ENCODE measurements at regions of chr2 and their contacts with region 1.

Region 1: DNA sequence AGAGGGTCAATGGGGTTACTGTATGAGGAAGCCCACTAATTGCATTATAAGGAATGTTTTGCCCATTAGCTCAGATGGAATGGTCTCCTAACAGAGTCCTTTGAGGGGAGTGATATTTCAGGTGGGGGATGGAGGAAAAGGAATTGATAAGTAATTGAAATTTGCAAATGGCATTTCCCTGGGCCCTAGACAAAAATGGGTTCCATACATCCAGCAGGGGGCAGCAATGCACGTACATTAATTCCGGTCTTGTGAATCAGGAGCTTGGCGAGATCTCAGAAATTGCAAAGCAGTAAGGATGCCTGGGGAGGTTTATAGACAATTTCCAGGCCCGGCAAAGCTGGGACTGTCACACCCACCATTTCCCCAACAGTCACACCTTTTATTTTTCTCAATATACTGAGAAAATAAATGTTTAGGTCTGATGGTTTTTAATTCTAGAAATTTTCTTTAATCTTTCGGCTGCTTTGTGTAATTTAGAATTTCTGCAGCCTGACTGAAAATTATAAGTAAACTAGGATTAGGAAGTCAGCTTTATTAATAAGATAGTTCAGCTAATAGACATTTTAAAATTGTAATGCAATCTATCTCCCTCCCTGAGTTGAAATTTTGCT is 122.8 kb downstream of the LYPD1 start:
- DNase-seq: peak; percentile 10
- H3K4me3 ChIP-seq: no peak overlapping the region
- H3K27me3 ChIP-seq: no peaks in the 10 kb centered on the region
- CTCF ChIP-seq: peak; percentile 60

Region 2: DNA sequence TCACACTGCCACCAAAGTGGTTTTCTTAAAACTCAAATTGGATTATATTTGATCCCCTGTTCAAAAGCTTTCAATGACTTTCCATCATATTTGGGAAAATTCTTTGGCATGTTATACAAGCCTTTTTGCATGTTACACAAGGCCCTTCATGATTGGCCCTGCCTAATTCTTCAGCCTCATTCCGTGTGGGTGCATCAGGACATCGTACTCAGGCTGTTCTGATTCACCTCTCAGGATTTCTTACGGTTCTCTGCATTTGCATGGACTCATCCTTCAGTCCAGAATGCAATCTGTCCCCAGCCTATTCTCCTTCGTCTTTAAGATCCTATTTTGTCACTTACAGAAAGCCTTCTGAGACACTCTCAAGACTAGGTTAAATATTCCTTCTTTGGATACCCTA is 15.1 kb after region 1 on chr2:
- CTCF ChIA-PET with region 1: interaction called, 17 read pairs
- POLR2A ChIA-PET with region 1: no interaction called
- DNase-seq: no peak
- H3K4me3 ChIP-seq: no peak overlapping the region
- H3K27me3 ChIP-seq: no peaks in the 10 kb centered on the region
- CTCF ChIP-seq: no peak

Region 3: GRCh38 chr2:132582353-132582739 is 35.2 kb after region 1 on chr2:
- CTCF ChIA-PET with region 1: no interaction called
- POLR2A ChIA-PET with region 1: no interaction called
- DNase-seq: no peak
- H3K4me3 ChIP-seq: no peak overlapping the region
- H3K27me3 ChIP-seq: no peaks in the 10 kb centered on the region
- CTCF ChIP-seq: no peak

Region 4: GRCh38 chr2:132608311-132608710 is 61.1 kb after region 1 on chr2:
- CTCF ChIA-PET with region 1: no interaction called
- POLR2A ChIA-PET with region 1: no interaction called
- DNase-seq: no peak
- H3K4me3 ChIP-seq: no peak overlapping the region
- H3K27me3 ChIP-seq: no peaks in the 10 kb centered on the region
- CTCF ChIP-seq: no peak

Region 5: GRCh38 chr2:132692816-132693215 is 145.6 kb after region 1 on chr2:
- CTCF ChIA-PET with region 1: no interaction called
- POLR2A ChIA-PET with region 1: no interaction called
- DNase-seq: no peak
- H3K4me3 ChIP-seq: no peak overlapping the region
- H3K27me3 ChIP-seq: no peaks in the 10 kb centered on the region
- CTCF ChIP-seq: no peak

Region 6: GRCh38 chr2:133171393-133172004 is 624.3 kb after region 1 on chr2:
- CTCF ChIA-PET with region 1: interaction called, 12 read pairs
- POLR2A ChIA-PET with region 1: no interaction called
- DNase-seq: peak; percentile 9
- H3K4me3 ChIP-seq: no peak overlapping the region
- H3K27me3 ChIP-seq: no peaks in the 10 kb centered on the region
- CTCF ChIP-seq: peak; percentile 60

Region 7: GRCh38 chr2:133204421-133204820 is 657.2 kb after region 1 on chr2:
- CTCF ChIA-PET with region 1: no interaction called
- POLR2A ChIA-PET with region 1: no interaction called
- DNase-seq: no peak
- H3K4me3 ChIP-seq: no peak overlapping the region
- H3K27me3 ChIP-seq: no peaks in the 10 kb centered on the region
- CTCF ChIP-seq: no peak

Measured in BJ (cell line).